Activated CD4-positive, alpha-beta T cell treated with anti-CD3 and anti-CD28 coated beads, Interleukin-2, amount 10 ng/mL, durations not matched to agents 7 days and 5 days (primary cell): ENCODE measurements at regions of chr1 and their contacts with region 1.

Region 1: DNA sequence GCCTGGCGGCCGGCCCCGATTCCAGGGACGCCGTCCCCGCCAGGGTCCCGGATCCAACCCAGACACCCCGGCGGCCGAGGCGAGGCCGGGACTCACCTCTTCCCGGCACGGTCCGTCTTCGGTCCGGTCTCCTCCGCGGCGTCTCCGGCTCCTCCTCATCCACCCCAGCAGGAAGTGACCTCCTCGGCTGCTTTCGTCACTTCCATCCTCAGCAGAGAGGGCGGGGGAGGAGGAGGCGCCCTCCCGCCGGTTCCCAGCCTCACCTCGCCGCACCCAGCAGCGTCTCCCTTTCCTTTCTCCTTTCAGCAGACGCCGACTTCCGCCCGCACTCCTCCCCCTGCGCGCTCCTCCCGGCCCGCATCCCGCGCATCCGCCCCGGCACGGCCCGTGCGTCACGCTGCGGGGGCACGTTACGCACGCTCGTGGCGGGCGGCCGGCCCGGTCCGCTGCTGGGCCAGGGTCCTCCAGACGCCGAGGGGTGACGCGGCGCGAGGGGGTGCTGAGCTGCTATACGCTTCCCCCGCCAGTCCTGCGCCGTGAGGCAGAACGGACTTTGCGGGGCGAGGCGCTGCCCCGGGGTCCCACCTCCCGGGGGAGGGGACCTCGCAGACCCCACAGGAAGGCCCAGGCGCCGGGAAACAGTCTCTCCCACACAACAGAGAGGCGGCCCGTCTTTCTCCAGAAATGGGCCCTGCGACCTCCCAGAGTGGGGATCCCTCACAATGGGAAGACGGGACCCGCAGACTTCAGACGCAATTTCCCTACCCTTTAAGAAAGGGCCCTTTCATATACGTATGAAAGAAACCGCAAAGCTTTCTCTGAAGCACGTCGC is at the start of gene ETV3:
- DNase-seq: peak; percentile 92
- H3K4me3 Mint-ChIP-seq: peak within 1 kb of the TSS; percentile 94
- H3K27ac Mint-ChIP-seq: peak within 1 kb of the TSS; percentile 91
- H3K4me1 Mint-ChIP-seq: peaks cover 51% of the 10 kb centered on the region
- H3K27me3 Mint-ChIP-seq: peaks cover 3% of the 10 kb centered on the region
- total RNA-seq, gene ETV3: 33.3 to 37.5 TPM

Region 2: GRCh38 chr1:157073944-157074767 is 64.3 kb before region 1 on chr1:
- CTCF ChIA-PET with region 1: no interaction called
- POLR2A ChIA-PET with region 1: no interaction called
- DNase-seq: peak; percentile 40
- H3K4me3 Mint-ChIP-seq: no peak overlapping the region
- H3K27ac Mint-ChIP-seq: no peak overlapping the region
- H3K4me1 Mint-ChIP-seq: peaks cover 2% of the 10 kb centered on the region
- H3K27me3 Mint-ChIP-seq: peaks cover 26% of the 10 kb centered on the region

Region 3: DNA sequence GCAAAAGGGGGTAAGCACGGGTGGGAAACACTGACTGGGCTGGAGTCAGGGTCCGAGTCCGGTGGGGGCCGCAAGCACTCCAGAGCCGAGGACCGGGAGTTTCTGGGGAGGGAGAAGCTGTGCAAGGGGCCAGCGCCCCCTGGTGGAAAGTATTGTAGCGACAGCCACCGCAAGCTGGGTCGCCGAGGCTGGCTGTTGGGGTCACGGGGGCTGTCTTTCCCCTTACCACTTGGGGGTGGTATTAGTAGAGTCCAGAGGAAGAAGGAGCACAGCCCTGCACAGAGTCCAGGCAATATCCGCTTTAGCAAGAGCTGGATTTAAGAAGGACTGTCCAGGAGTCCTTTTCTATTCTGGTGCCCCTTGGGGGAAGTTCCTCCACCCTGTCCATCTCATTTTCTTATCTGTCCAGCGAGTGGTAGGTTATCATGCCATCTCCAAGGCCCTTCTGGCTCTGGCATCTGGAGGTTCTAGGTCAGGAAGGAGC is 17.7 kb after region 1 on chr1:
- CTCF ChIA-PET with region 1: interaction called, 18 read pairs
- POLR2A ChIA-PET with region 1: interaction called, 3 read pairs
- DNase-seq: peak; percentile 81
- H3K4me3 Mint-ChIP-seq: no peak overlapping the region
- H3K27ac Mint-ChIP-seq: peak overlapping the region; percentile 68
- H3K4me1 Mint-ChIP-seq: peaks cover 19% of the 10 kb centered on the region
- H3K27me3 Mint-ChIP-seq: peaks cover 22% of the 10 kb centered on the region